Right cardiac atrium (tissue), 5 donors: ENCODE measurements at regions of chr15 and their contacts with region 1.

Region 1: GRCh38 chr15:70722266-70723121 is 40.9 kb downstream of the UACA start:
- DNase-seq: no peak
- ATAC-seq: no peak
- H3K4me3 ChIP-seq: no peak overlapping the region
- H3K27ac ChIP-seq: no peak overlapping the region
- H3K4me1 ChIP-seq: peaks cover 7% of the 10 kb centered on the region
- H3K27me3 ChIP-seq: no peaks in the 10 kb centered on the region

Region 2: DNA sequence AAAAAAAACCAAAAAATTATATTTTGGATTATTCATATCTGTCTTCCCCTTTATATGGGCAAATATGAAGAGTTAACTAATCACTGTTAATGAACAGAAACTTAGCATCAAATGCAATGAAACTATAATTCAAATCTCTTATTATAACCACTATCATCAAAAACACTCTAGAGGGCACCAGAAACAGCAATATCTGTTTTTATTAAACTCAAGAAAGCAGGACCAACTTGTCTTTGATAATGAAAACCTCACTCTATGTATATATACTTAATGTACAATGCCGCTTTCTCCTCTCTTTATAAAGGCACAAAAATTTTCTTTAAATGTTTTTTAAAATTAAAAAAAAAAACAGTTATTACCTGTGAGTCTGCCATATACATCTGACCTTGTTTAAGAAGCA is 51.8 kb before region 1 on chr15:
- intact Hi-C with region 1: loop called in 1 of 4 experiments (anchors 10 kb)
- DNase-seq: no peak
- ATAC-seq: no peak
- H3K4me3 ChIP-seq: no peak overlapping the region
- H3K27ac ChIP-seq: no peak overlapping the region
- H3K4me1 ChIP-seq: peaks cover 5% of the 10 kb centered on the region
- H3K27me3 ChIP-seq: no peaks in the 10 kb centered on the region

Region 3: DNA sequence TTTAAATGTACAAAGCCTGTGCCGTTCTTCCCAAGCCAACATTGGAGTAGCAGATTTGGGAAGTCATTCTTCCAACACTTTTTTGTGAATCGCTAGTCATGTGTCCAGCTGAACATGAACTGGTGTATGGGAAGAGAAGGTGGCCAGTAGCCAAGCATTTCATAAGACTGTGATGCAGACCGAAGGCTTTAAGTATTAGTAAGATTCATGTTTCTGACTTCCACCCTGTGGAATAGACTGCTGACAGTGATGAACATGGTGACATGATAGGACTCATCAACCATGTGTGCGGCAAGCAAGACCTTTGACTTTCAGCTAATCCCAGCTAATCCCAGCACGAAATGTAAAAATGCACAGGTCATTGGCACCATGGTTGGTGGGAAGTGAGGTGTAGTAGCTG is 344.5 kb after region 1 on chr15:
- intact Hi-C with region 1: loop called in 1 of 4 experiments (anchors 10 kb)
- DNase-seq: peak in 1 of 3 donors; percentile 22
- ATAC-seq: peak; percentile 55 to 56
- H3K4me3 ChIP-seq: no peak overlapping the region
- H3K27ac ChIP-seq: no peak overlapping the region
- H3K4me1 ChIP-seq: no peaks in the 10 kb centered on the region
- H3K27me3 ChIP-seq: no peaks in the 10 kb centered on the region